OCI-LY7 (cell line): ENCODE measurements at regions of chr10 and their contacts with region 1.

Region 1: GRCh38 chr10:74081192-74081803 is 69.3 kb downstream of the AP3M1 start:
- DNase-seq: peak; percentile 68
- H3K4me3 ChIP-seq: no peak overlapping the region
- H3K27ac ChIP-seq: no peak overlapping the region
- H3K4me1 ChIP-seq: peaks cover 44% of the 10 kb centered on the region
- CTCF ChIP-seq: peak; percentile 90

Region 2: GRCh38 chr10:74035303-74035702 is 46.0 kb before region 1 on chr10:
- CTCF ChIA-PET with region 1: no interaction called
- POLR2A ChIA-PET with region 1: interaction called, 4 read pairs
- intact Hi-C with region 1: loop called (anchors 5 kb)
- DNase-seq: peak; percentile 38
- H3K4me3 ChIP-seq: no peak overlapping the region
- H3K27ac ChIP-seq: no peak overlapping the region
- H3K4me1 ChIP-seq: peaks cover 10% of the 10 kb centered on the region
- CTCF ChIP-seq: peak; percentile 79